HepG2 (cell line): ENCODE measurements at regions of chr6 and their contacts with region 1.

Region 1: GRCh38 chr6:153108315-153108714 is 22.8 kb downstream of the RGS17 start:
- DNase-seq: no peak
- ATAC-seq: peak; percentile 65
- H3K4me3 ChIP-seq: no peak overlapping the region
- H3K27ac ChIP-seq: no peak overlapping the region
- H3K4me1 ChIP-seq: no peaks in the 10 kb centered on the region
- H3K27me3 ChIP-seq: peaks cover 0 to 5% of the 10 kb centered on the region in 2 experiments; a peak in 2 of 5 replicates
- CTCF ChIP-seq: peak; percentile 19; the same call in 1 of the 2 replicates
- EP300 ChIP-seq: no peak
- POLR2A ChIP-seq: no peak
- RAD21 ChIP-seq: no peak

Region 2: DNA sequence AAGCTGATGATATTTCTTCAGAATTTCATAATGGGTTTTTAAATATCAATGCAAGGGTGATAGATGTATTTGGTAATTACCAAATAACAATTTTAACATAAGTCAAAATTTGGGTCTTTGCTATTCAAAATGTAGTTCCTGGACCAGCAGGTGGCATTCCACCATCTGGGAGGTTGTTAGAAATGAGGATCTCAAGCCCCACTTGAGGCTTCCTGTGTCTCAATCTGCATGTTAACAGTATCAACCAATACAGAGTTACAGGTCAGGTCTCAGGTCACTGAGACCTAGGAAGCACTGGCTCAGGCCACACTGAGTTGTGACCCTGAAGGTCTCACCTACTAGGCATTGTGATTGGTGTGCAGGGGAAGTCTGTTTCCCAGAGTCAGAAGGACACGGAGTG is 48.6 kb before region 1 on chr6:
- CTCF ChIA-PET with region 1: no interaction called
- POLR2A ChIA-PET with region 1: no interaction called
- in situ Hi-C with region 1: no loop called
- intact Hi-C with region 1: loop called (anchors 1 kb)
- DNase-seq: peak; percentile 7
- ATAC-seq: no peak; the same call in 2 of the 3 replicates
- H3K4me3 ChIP-seq: no peak overlapping the region
- H3K27ac ChIP-seq: no peak overlapping the region
- H3K4me1 ChIP-seq: no peaks in the 10 kb centered on the region
- H3K27me3 ChIP-seq: no peaks in the 10 kb centered on the region
- CTCF ChIP-seq: no peak
- EP300 ChIP-seq: no peak
- POLR2A ChIP-seq: no peak
- RAD21 ChIP-seq: no peak

Region 3: DNA sequence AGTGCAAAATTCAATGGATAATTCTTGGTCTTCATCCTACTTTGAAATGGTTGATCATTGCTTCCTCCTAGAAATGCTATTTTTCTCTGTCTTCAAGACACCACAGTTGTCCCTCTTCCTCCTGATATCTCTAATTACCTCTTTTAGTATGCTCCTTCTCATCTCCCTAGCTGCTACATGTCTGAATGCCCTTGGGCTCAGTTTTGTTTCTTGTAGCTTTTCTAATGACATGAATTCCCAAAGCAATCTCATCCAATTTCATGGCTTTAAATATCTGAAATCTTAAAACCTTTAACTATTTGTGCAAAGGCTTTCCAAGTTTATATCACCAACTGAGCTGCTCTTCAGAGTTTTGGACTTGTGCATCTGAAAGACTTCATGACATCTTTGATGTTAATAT is 143.0 kb after region 1 on chr6:
- CTCF ChIA-PET with region 1: no interaction called
- POLR2A ChIA-PET with region 1: no interaction called
- in situ Hi-C with region 1: no loop called
- intact Hi-C with region 1: no loop called
- DNase-seq: no peak
- ATAC-seq: no peak
- H3K4me3 ChIP-seq: no peak overlapping the region
- H3K27ac ChIP-seq: no peak overlapping the region
- H3K4me1 ChIP-seq: no peaks in the 10 kb centered on the region
- H3K27me3 ChIP-seq: no peaks in the 10 kb centered on the region; a peak in 1 of 5 replicates
- CTCF ChIP-seq: no peak
- EP300 ChIP-seq: no peak
- POLR2A ChIP-seq: no peak
- RAD21 ChIP-seq: no peak